Activated CD4-positive, alpha-beta memory T cell treated with anti-CD3 and anti-CD28 coated beads for 36 hours (primary cell): ENCODE measurements at regions of chr19 and their contacts with region 1.

Region 1: DNA sequence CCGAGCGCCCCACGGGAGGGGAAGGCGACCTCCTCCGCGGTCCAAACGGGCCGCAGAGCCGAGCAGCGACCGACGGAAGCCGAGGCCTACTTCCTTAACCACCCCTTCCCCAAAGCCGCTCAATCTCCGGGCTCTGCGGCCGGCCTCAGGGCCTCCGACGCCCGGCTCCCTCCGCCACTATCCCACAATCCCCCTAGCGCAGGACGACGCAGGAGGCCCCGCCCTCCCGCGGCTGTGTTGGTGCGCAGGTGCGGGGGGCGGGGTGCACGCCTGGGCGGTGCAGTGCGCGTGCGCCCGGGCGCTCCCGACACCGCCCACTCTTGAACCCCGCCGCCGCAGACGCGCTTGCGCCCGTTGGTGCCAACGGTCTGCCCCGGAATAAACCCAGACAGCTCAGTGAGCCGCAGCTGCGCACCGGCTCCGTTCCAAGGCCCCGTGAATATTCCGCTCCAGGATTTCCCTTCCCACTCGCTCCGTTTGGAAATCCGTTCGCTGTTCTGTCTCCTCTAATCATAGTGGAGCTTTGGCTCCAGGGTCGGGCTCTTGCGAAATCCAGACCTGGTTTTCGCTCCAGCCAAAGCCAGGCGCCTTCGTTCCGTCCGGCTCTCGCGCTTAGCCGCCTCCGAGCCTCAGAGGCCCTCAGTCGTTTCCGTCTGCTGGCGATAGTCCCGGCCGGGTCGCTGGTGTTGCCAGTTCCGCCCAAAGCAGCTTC is at the start of gene PPP6R1:
- DNase-seq: peak; percentile 96
- H3K4me3 Mint-ChIP-seq: peak within 1 kb of the TSS; percentile 93
- H3K27ac Mint-ChIP-seq: peak within 1 kb of the TSS; percentile 98
- H3K4me1 Mint-ChIP-seq: peaks cover 30% of the 10 kb centered on the region
- H3K27me3 Mint-ChIP-seq: no peaks in the 10 kb centered on the region
- total RNA-seq, gene PPP6R1: 180 to 200 TPM

Region 2: GRCh38 chr19:55117636-55118391 is 141.2 kb before region 1 on chr19 and contains the start of gene PPP1R12C:
- CTCF ChIA-PET with region 1: no interaction called
- POLR2A ChIA-PET with region 1: interaction called, 3 read pairs
- intact Hi-C with region 1: loop called (anchors 2 kb)
- DNase-seq: peak; percentile 99
- H3K4me3 Mint-ChIP-seq: peak within 1 kb of the TSS; percentile 97
- H3K27ac Mint-ChIP-seq: peak within 1 kb of the TSS; percentile 89
- H3K4me1 Mint-ChIP-seq: peaks cover 30% of the 10 kb centered on the region
- H3K27me3 Mint-ChIP-seq: peaks cover under 1% of the 10 kb centered on the region
- total RNA-seq, gene PPP1R12C: 62.7 to 73.2 TPM

Region 3: DNA sequence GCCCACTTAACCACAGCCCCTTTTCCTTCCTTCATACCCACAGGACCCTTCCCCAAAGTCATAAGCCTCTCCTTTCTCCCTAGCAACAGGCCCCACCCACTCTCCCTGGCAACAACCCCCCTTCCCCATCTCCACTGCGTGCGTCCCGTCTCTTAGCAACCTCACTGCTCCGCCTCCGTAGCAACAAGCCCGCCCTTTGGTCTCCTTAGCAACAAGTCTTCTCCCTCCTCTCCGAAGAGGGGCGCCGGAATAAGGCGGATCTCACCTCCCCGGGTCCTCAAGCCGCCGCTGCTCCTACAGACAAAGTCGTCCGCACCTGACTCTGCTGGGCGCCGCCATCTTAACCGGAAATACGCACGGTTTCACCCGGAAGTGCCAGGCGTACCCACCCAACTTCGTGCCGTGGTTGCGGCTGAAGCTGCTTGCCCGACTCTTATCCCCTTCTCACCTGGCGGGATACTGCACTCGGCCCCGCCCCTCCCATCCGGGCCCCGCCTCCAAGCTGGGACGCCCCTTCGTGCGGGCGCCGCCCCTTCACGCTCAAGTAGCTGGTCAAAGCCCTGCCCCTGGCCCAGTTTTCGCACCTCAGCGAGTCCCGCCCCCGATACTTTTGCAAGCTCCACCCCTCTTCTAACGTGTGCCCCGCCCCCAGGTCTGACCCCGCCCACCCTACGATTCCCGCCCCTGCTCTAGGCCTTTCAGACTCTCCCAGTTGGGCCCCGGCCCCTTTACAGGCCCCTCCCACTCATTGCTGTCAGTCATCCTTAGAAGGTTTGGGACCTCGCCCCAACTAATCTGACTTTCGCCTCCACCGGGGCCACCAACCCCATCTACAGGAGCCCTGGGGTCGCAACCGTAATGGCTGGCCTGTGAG is 21.0 kb after region 1 on chr19 and contains the start of gene HSPBP1:
- CTCF ChIA-PET with region 1: no interaction called
- POLR2A ChIA-PET with region 1: interaction called, 18 read pairs
- intact Hi-C with region 1: loop called (anchors 1 kb)
- DNase-seq: peak; percentile 98
- H3K4me3 Mint-ChIP-seq: peak within 1 kb of the TSS; percentile 93
- H3K27ac Mint-ChIP-seq: peak within 1 kb of the TSS; percentile 84
- H3K4me1 Mint-ChIP-seq: peaks cover 42% of the 10 kb centered on the region
- H3K27me3 Mint-ChIP-seq: no peaks in the 10 kb centered on the region
- total RNA-seq, gene HSPBP1: 45.0 to 45.4 TPM

Region 4: GRCh38 chr19:55339048-55339888 is 80.3 kb after region 1 on chr19 and contains the start of gene KMT5C:
- CTCF ChIA-PET with region 1: interaction called, 9 read pairs
- POLR2A ChIA-PET with region 1: interaction called, 14 read pairs
- intact Hi-C with region 1: loop called (anchors 1 kb)
- DNase-seq: peak; percentile 100
- H3K4me3 Mint-ChIP-seq: peak within 1 kb of the TSS; percentile 87
- H3K27ac Mint-ChIP-seq: peak within 1 kb of the TSS; percentile 95
- H3K4me1 Mint-ChIP-seq: peaks cover 13% of the 10 kb centered on the region
- H3K27me3 Mint-ChIP-seq: peaks cover 6% of the 10 kb centered on the region
- total RNA-seq, gene KMT5C: 34.2 to 35.2 TPM

Region 5: DNA sequence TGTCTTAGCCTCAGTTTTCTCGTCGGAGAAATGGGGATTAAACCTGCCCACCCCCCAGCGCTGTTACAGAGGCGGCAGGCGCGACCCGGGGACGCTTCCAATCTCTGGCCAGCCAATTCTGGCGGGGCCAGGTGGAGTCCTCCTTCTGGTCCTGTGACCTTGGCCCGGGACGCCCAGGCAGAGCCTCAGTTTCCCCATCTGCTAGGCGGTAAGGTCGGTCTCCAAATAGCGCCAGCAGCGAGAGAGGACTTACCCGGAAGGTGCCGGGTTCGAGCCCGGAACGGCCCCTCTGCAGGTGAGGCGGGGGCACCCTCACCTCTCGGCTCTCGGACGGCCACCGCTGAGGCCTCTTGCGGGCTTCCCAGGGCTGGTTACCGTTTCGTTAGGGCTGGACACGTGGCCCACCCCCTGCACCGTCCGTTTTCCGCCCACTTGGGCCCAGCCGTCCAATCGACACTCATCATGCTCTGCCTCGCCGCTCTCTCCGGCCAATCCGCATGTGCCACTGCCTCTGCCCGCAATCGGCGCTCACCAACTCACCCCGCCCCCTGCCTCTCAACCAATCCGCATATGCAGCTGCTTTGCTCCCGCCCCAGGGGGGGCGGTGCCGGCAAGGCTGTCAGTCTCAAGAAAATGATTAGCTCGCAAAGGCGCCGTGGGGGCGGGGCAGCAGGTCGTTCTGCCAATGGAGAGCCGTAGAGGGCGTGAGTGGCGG is 202.4 kb after region 1 on chr19 and contains the start of gene ISOC2:
- CTCF ChIA-PET with region 1: no interaction called
- POLR2A ChIA-PET with region 1: no interaction called
- intact Hi-C with region 1: loop called (anchors 1 kb)
- DNase-seq: peak; percentile 100
- H3K4me3 Mint-ChIP-seq: peak within 1 kb of the TSS; percentile 91
- H3K27ac Mint-ChIP-seq: peak within 1 kb of the TSS; percentile 84
- H3K4me1 Mint-ChIP-seq: peaks cover 21% of the 10 kb centered on the region
- H3K27me3 Mint-ChIP-seq: peaks cover 2% of the 10 kb centered on the region
- total RNA-seq, gene ISOC2: 24.6 to 24.7 TPM

Region 6: DNA sequence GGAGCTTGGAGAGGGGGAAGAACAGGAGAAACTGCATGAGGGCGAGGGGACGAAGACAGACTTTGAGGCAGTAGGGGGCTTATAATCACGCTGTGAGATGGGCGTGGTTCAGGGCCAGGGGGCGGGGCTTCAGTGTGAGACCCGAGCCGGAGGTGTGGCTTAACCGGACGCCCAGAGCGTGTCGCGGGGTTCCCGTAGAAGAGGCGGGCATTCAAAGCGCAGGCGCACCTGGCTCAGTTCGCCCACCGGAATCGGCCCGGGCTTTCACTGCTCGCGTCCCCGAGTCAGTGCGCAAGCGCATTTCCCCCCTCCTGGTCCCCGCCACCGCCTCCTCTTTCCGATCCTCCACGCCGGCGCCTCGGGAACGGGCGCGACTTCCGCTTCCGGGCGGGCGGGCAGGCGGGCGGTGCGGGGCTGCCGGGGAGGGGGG is 346.2 kb after region 1 on chr19:
- CTCF ChIA-PET with region 1: interaction called, 3 read pairs
- POLR2A ChIA-PET with region 1: no interaction called
- intact Hi-C with region 1: loop called (anchors 1 kb)
- DNase-seq: peak; percentile 100
- H3K4me3 Mint-ChIP-seq: peak overlapping the region; percentile 80
- H3K27ac Mint-ChIP-seq: peak overlapping the region; percentile 96
- H3K4me1 Mint-ChIP-seq: peaks cover 49% of the 10 kb centered on the region
- H3K27me3 Mint-ChIP-seq: no peaks in the 10 kb centered on the region